ENCODE measurements at regions of chr6 and their contacts with region 1.

Region 1: DNA sequence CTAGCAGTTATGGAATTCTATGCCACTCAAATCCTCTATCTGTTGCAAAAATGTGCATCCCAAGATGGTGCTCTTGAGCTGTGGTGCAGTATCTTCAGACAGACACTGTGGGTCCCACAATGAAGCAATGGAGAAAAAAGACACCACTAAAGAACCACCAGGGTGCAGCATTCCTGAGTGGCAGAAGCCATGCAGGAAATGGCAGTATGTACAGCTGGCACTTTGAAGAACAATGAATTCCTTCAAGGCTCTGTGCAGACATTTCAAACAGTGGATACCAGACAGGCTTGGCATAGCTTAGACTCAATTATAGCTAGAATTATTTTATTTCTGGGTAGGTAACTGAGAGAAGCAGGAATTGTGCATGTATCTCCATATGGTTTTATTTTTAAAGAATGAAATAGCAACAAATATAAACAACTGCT is 24.0 kb upstream of the HDAC2 start:
- DNase-seq: peak; percentile 35
- CTCF ChIP-seq: peak; percentile 20

Region 2: DNA sequence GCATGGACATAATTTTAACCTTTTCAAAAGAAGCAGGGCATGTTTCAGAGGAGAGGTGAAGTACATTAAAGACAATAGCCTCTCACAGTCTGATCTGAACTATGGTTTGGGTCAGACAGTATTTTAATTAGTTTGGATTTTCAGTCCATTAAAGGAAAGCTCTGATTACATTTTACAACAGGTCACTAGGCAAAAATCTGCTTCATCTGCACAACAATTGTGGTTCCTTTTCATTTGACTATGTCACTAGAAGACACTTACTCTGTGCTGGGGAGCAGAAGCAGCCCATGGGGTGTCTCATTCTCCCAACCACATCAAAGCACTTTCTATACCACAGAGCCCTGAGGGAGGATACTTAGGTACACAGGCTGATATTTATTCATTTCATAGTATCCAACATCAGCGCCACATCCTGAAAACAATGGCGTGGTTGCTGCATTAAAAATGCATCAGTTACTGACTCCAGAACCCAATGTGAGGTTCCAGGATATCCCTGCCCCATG is 12.6 kb after region 1 on chr6:
- CTCF ChIA-PET with region 1: interaction called, 17 read pairs
- POLR2A ChIA-PET with region 1: no interaction called
- DNase-seq: no peak
- CTCF ChIP-seq: no peak